ENCODE measurements at regions of chr5 and their contacts with region 1.

Region 1: DNA sequence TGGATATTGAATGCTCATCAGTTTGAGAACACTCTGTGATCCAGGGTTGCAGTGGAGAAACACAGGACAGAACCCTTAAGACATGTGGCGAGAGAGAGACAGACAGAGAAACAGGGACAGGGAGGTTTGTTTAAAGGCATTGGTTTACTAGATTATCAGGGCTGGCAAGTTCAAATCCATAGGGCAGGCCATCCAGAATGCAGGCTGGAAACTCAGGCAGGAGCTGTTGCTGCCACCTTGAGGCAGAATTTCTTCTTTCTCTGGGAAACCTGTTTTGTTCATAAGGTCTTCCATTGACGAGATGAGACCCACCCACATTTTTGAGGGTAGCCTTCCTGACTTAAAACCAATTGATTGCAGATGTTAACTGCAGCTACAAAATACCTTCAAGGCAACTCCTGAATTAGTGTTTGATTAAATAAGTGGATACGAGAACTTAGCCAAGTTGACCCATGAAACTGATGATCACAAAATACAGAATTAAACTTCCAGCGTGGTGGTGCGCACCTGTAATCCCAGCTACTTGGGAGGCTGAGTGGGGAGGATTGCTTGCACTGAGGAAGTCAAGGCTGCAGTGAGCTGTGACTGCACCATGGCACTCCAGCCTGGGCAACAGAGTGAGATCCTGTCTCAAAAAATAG is 55.9 kb downstream of the NSUN2 start:
- DNase-seq: peak in 1 of 2 donors; percentile 36
- ATAC-seq: peak; percentile 58 to 67
- H3K4me3 ChIP-seq: no peak overlapping the region
- H3K27ac ChIP-seq: peak overlapping the region; percentile 54 to 80 (median 66)
- H3K4me1 ChIP-seq: peaks cover 6 to 13% of the 10 kb centered on the region in 2 donors
- H3K27me3 ChIP-seq: no peaks in the 10 kb centered on the region
- CTCF ChIP-seq: peak; percentile 43 to 71 (median 57)
- POLR2A ChIP-seq: no peak

Region 2: GRCh38 chr5:5481206-5481605 is 1095.8 kb before region 1 on chr5:
- in situ Hi-C with region 1: loop called in 3 of 4 experiments (anchors 10 to 25 kb)
- intact Hi-C with region 1: no loop called
- DNase-seq: peak in 1 of 2 donors; percentile 23
- ATAC-seq: peak; percentile 55 to 83
- H3K4me3 ChIP-seq: peak overlapping the region in 1 of 4 donors; percentile 20
- H3K27ac ChIP-seq: peak overlapping the region; percentile 71 to 85 (median 84)
- H3K4me1 ChIP-seq: peaks cover 23 to 28% of the 10 kb centered on the region in 2 donors
- H3K27me3 ChIP-seq: no peaks in the 10 kb centered on the region
- CTCF ChIP-seq: no peak
- POLR2A ChIP-seq: no peak

Region 3: GRCh38 chr5:5795074-5795771 is 781.8 kb before region 1 on chr5:
- in situ Hi-C with region 1: no loop called
- intact Hi-C with region 1: loop called (anchors 10 kb)
- DNase-seq: peak; percentile 68 to 71
- ATAC-seq: peak; percentile 97 to 99
- H3K4me3 ChIP-seq: no peak overlapping the region
- H3K27ac ChIP-seq: peak overlapping the region; percentile 37 to 71 (median 68)
- H3K4me1 ChIP-seq: peaks cover 5 to 8% of the 10 kb centered on the region in 2 donors
- H3K27me3 ChIP-seq: no peaks in the 10 kb centered on the region
- CTCF ChIP-seq: no peak
- POLR2A ChIP-seq: no peak

Region 4: DNA sequence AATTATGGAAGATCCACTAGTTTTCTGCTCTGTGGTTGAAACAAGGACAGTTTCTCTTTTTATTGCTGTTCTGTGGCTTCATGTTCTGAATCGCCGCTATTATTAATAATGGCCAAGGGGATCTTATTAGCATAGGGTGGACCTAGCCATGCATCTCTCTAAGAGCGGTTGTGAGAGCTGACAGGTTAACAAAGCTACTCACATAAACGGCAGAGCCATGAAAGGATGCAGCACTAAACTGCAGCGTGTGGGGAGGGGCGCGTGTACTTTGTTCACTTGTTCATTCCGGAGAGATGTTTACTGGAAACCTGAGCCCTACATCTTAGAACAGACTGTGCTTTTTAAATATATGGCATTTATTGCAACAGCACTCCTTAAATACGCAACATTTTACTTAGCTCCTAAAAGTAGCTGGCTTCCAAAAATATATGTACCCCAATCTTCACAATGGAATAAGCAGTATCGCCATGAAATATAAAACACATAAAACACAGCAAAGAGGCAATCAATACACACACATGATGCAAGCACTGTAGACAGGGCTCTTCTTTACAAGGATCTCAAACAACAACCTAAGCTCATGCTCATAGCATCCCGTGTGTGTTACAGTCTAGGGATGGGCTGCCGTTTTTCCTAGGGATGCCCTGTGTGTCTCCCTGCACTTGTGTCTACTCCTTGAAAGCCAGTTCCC is 623.3 kb before region 1 on chr5:
- in situ Hi-C with region 1: no loop called
- intact Hi-C with region 1: no loop called
- DNase-seq: no peak
- ATAC-seq: no peak
- H3K4me3 ChIP-seq: no peak overlapping the region
- H3K27ac ChIP-seq: no peak overlapping the region
- H3K4me1 ChIP-seq: no peaks in the 10 kb centered on the region
- H3K27me3 ChIP-seq: no peaks in the 10 kb centered on the region
- CTCF ChIP-seq: no peak
- POLR2A ChIP-seq: no peak

Region 5: DNA sequence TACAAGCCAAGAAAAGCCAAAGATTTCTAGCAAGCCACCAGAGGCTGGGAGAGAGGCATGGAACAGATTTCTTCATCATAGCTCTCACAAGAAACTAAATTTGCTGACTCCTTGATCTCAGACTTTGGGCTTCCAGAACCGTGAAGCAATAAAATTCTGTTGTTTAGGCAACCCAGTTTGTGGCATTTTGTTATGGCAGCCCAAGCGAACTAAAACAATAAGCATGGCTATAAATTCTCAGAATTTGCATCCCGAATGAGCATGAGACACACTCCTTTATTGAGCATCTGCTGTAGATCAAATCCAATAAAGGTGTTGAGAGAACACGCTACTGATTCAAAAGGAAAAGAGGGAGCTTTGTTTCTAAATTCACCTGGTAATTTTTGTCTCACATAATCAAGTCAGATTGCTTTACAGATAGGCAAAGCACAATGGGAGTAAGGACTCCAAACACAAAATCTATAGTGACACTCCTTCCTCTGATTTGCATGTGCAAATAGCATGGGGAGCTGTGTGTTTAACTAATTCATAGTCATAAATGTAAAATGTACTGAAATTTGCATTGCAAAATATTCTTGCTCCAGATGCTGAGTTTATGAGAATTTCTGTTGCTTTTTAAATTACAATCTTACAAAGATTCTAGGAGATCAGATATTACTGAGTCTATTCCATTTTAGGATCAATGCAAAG is 507.3 kb before region 1 on chr5:
- in situ Hi-C with region 1: no loop called
- intact Hi-C with region 1: no loop called
- DNase-seq: no peak
- ATAC-seq: no peak
- H3K4me3 ChIP-seq: no peak overlapping the region
- H3K27ac ChIP-seq: no peak overlapping the region
- H3K4me1 ChIP-seq: no peaks in the 10 kb centered on the region
- H3K27me3 ChIP-seq: no peaks in the 10 kb centered on the region
- CTCF ChIP-seq: no peak
- POLR2A ChIP-seq: no peak

Region 6: GRCh38 chr5:6291961-6292360 is 285.0 kb before region 1 on chr5:
- in situ Hi-C with region 1: no loop called
- intact Hi-C with region 1: loop called (anchors 1 kb)
- DNase-seq: no peak
- ATAC-seq: no peak
- H3K4me3 ChIP-seq: no peak overlapping the region
- H3K27ac ChIP-seq: no peak overlapping the region
- H3K4me1 ChIP-seq: no peaks in the 10 kb centered on the region
- H3K27me3 ChIP-seq: no peaks in the 10 kb centered on the region
- CTCF ChIP-seq: peak in 1 of 5 experiments; percentile 27
- POLR2A ChIP-seq: no peak

Region 7: DNA sequence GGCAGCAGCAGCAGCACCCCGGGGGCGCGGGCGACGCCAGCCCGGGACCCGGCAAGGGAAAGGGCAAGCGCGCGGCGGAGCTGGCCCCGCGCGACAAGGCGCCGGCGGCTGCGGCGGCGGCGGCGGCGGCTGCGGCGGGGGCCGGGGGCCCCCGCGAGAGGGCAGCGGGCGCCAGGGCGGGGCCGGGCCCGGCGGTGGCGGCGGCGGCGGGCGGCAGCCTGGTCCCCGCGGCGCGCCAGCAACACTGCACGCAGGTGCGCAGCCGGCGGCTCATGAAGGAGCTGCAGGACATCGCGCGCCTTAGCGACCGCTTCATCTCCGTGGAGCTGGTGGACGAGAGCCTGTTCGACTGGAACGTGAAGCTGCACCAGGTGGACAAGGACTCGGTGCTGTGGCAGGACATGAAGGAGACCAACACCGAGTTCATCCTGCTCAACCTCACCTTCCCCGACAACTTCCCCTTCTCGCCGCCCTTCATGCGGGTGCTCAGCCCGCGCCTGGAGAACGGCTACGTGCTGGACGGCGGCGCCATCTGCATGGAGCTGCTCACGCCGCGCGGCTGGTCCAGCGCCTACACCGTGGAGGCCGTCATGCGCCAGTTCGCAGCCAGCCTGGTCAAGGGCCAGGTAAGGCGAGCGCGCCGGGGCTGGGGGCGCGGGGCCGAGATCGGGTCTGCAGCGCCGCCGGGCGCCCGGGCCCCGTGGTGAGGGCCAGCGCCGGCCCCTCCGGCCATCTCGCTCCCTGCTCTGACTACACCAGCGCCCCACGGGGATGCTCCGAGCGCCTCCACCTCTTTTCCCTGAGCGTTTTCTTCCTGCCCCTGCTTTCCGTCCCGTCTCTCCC is 128.1 kb before region 1 on chr5 and contains the start of gene UBE2QL1:
- in situ Hi-C with region 1: no loop called
- intact Hi-C with region 1: loop called (anchors 1 kb)
- DNase-seq: peak in 1 of 2 donors; percentile 38
- ATAC-seq: peak; percentile 13 to 37
- H3K4me3 ChIP-seq: peak within 1 kb of the TSS; percentile 58 to 78 (median 71)
- H3K27ac ChIP-seq: peak within 1 kb of the TSS; percentile 91 to 97 (median 96)
- H3K4me1 ChIP-seq: peaks cover 13 to 17% of the 10 kb centered on the region in 2 donors
- H3K27me3 ChIP-seq: no peaks in the 10 kb centered on the region
- CTCF ChIP-seq: no peak
- POLR2A ChIP-seq: peak; percentile 36 to 71
- total RNA-seq, gene UBE2QL1: 48.8 to 150 (median 67.0) TPM

Region 8: DNA sequence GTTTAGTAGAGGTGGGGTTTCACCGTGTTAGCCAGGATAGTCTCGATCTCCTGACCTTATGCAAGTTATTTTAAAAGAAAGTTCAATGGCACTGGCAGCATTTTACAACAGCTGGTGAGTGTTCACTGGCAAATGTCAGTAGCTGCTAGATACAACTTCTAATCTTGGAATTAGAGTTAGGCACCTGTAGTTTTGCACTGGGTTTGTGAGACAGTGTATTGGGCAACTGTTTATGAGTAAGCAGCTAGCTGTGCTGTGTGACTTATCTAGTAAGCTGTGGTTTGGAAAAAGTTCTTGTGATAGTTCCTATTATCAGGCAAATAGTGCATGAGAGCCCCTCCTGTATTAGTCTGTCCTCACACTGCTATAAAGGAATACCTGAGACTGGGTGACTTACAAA is 66.8 kb before region 1 on chr5:
- in situ Hi-C with region 1: no loop called
- intact Hi-C with region 1: loop called (anchors 1 kb)
- DNase-seq: peak in 1 of 2 donors; percentile 23
- ATAC-seq: peak; percentile 98 to 100
- H3K4me3 ChIP-seq: no peak overlapping the region
- H3K27ac ChIP-seq: peak overlapping the region; percentile 36 to 81 (median 68)
- H3K4me1 ChIP-seq: peaks cover 6 to 11% of the 10 kb centered on the region in 2 donors
- H3K27me3 ChIP-seq: no peaks in the 10 kb centered on the region
- CTCF ChIP-seq: no peak
- POLR2A ChIP-seq: no peak

Region 9: DNA sequence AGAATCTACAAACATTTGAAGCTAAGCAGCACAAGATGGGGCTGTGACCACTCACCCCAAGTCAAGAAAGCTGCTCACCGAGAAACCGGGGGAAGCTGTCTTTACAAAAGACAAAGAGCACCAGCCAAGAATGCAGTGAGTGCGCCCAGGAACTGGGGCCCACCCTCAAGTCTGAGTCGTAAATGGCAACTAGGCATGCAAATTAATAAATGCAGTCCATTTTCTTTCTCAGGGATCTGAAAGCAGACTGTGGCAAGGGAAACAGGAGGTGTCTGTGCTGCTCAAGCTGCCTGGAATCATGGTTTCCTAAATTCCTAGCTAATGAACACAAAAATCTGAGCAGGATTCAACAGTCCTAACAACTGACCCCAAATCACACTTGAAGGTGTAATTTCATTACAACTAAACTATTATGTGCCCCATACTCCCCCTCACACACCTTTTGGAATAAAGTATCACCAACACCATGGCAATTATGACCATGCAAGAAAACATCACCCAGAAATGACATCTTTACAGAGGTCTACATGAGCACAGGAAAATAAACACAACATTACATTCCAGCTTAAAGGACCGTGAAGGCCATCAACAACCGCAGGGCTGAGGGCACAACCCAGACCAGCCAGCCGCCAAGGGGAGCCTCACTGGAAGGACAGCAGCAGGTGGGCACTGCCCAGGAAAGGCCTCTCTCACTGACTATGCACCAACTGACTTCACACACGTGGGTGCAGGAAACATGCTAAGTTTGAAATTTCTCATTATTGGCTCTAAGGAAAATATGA is 38.2 kb after region 1 on chr5:
- in situ Hi-C with region 1: no loop called
- intact Hi-C with region 1: no loop called
- DNase-seq: peak in 1 of 2 donors; percentile 38
- ATAC-seq: peak in 1 of 2 donors; percentile 60
- H3K4me3 ChIP-seq: no peak overlapping the region
- H3K27ac ChIP-seq: peak overlapping the region in 1 of 4 donors; percentile 33
- H3K4me1 ChIP-seq: peaks cover 0 to 13% of the 10 kb centered on the region in 2 donors
- H3K27me3 ChIP-seq: no peaks in the 10 kb centered on the region
- CTCF ChIP-seq: no peak
- POLR2A ChIP-seq: no peak